AG04449 (cell line): ENCODE measurements at regions of chr3 and their contacts with region 1.

Region 1: DNA sequence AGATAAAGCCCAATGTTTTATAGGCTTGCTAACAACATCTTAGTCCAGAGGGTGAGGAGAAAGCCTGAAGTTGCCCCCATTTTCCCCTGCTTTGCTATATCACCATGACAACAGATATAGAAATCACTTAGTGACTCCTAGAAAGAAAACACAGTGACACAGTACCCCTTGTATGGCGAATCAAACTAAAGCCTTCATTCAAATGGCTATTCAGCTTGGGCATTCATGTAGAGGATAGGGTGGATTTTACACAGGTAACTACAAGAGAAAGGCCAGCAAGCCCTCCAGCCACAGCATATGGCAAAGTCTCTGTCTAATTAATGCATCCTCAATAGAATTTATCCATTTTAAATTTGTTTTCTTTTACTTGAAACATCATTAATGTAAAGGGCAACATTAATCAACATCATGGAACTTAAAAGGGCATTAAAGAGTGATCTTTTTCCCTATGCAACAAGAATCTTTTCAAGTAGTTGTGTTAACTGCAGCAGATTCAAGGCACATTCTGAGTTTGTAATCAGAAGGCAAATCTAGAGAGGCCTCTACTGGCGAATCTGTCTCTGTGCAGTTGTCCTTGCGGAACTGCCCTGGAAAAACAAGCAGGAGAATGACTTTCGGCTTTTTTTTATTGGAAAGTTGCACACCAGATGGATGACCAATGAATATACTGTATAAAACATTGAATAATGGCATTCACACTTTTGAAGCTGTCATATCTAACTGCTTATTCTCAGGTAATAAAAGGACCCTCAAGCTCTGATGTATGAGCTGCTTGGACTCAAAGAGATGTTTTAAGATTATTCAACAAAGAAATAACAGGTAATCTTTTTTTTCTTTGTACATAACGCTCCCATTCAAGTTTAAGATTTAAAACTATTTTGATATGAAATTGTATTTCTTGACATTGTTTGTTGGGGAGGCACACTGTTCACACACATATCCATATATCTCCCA is 621.7 kb upstream of the AGTR1 start:
- DNase-seq: peak; percentile 14
- H3K4me3 ChIP-seq: no peak overlapping the region
- CTCF ChIP-seq: peak; percentile 76

Region 2: DNA sequence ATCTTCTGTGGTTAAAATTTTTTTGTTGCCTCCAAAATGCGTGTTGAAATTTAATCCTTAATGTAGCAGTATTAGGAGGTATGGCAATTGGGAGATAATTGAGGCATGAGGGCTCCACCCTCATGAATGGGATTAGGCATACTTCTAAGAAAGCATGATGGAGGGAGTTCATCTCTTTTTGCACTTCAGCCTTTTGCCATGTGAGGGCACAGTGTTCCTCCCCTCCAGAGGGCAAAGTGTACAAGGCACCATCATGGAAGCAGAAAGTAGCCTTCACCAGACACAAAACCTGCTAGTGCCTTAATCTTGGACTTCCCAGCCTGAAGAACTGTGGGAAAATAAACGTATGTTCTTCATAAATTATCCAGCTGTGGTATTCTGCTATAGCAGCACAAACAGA is 237.4 kb before region 1 on chr3:
- CTCF ChIA-PET with region 1: interaction called, 28 read pairs
- POLR2A ChIA-PET with region 1: no interaction called
- DNase-seq: no peak
- H3K4me3 ChIP-seq: no peak overlapping the region
- CTCF ChIP-seq: peak; percentile 32

Region 3: GRCh38 chr3:148372206-148372875 is 296.3 kb after region 1 on chr3:
- CTCF ChIA-PET with region 1: no interaction called
- POLR2A ChIA-PET with region 1: no interaction called
- DNase-seq: no peak
- H3K4me3 ChIP-seq: no peak overlapping the region
- CTCF ChIP-seq: no peak